ENCODE measurements at regions of chr4 and their contacts with region 1.

Region 1: DNA sequence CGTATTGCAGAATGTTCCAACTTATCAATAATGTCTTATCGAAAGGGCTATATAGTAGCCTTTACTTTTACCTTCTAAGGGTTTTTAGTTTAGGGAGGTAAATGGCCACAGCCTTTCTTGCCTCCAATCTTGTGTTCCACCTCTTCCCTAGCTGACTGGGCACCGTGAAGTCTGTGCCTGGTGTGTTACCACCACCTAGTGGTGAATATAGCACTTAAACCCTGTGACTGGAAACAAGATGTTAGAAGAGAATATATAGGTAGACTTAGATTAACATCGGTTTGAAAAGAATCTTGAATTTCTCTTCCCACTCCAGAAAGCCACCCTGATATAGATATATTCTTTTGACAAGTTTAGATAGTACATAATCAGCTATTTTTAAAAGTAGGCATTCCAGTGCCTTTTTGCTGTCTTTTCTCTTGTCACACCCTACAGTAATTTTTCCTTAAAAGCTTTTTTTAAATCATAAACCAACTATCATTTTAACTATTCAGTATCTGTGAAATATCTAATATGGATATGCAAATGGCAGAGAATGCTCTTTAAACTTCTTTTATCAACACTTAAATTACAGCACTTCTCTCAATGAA is 27.8 kb upstream of the ADH7 start:
- DNase-seq: peak; percentile 44 to 63
- H3K4me3 ChIP-seq: no peak overlapping the region
- H3K27ac ChIP-seq: no peak overlapping the region
- H3K4me1 ChIP-seq: peaks cover 14% of the 10 kb centered on the region
- H3K27me3 ChIP-seq: no peaks in the 10 kb centered on the region
- CTCF ChIP-seq: peak; percentile 91

Region 2: GRCh38 chr4:98467627-98468072 is 995.3 kb before region 1 on chr4:
- CTCF ChIA-PET with region 1: no interaction called
- POLR2A ChIA-PET with region 1: no interaction called
- intact Hi-C with region 1: loop called (anchors 5 kb)
- DNase-seq: peak; percentile 53 to 69
- H3K4me3 ChIP-seq: peak overlapping the region; percentile 59
- H3K27ac ChIP-seq: no peak overlapping the region
- H3K4me1 ChIP-seq: 0 out of 2 replicates have a peak, but pooled peaks cover 3% of the 10 kb centered on the region
- H3K27me3 ChIP-seq: no peaks in the 10 kb centered on the region
- CTCF ChIP-seq: peak; percentile 81

Region 3: GRCh38 chr4:99088481-99089365 is 374.2 kb before region 1 on chr4 and contains the start of gene ADH5:
- CTCF ChIA-PET with region 1: no interaction called
- POLR2A ChIA-PET with region 1: interaction called, 12 read pairs
- intact Hi-C with region 1: no loop called
- DNase-seq: peak; percentile 65 to 66
- H3K4me3 ChIP-seq: peak within 1 kb of the TSS; percentile 99
- H3K27ac ChIP-seq: peak within 1 kb of the TSS; percentile 71
- H3K4me1 ChIP-seq: peaks cover 17% of the 10 kb centered on the region
- H3K27me3 ChIP-seq: no peaks in the 10 kb centered on the region
- CTCF ChIP-seq: no peak
- total RNA-seq, gene ADH5: 76.9 and 94.7 TPM in 2 replicates

Region 4: GRCh38 chr4:99219479-99219878 is 243.5 kb before region 1 on chr4:
- CTCF ChIA-PET with region 1: interaction called, 10 read pairs
- POLR2A ChIA-PET with region 1: no interaction called
- intact Hi-C with region 1: no loop called
- DNase-seq: no peak
- H3K4me3 ChIP-seq: no peak overlapping the region
- H3K27ac ChIP-seq: no peak overlapping the region
- H3K4me1 ChIP-seq: no peaks in the 10 kb centered on the region
- H3K27me3 ChIP-seq: no peaks in the 10 kb centered on the region
- CTCF ChIP-seq: no peak

Region 5: GRCh38 chr4:99885063-99885664 is 422.2 kb after region 1 on chr4:
- CTCF ChIA-PET with region 1: no interaction called
- POLR2A ChIA-PET with region 1: no interaction called
- intact Hi-C with region 1: loop called (anchors 1 kb)
- DNase-seq: no peak
- H3K4me3 ChIP-seq: no peak overlapping the region
- H3K27ac ChIP-seq: no peak overlapping the region
- H3K4me1 ChIP-seq: no peaks in the 10 kb centered on the region
- H3K27me3 ChIP-seq: no peaks in the 10 kb centered on the region
- CTCF ChIP-seq: peak; percentile 73